HEK293 (cell line): ENCODE measurements at regions of chr5 and their contacts with region 1.

Region 1: DNA sequence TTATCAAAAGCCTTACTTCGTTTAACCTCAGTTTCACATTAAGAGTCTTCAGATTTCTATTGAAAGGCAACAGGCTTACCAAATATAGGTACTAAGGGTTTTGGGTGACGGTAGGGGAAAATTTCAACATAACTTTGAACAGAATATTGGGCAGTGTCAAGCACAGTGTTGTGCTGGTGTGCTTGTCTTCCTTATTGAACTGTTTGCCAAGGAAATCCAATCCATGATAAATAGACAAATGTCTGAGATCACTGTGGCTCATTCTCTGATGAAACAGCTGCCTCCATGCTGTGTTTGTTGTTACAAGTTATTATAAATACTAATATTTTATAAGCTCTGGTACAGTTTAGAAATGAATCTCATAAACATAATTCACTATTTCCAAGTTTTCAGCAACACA is 730.1 kb downstream of the NR2F1-AS1 start:
- H3K4me3 ChIP-seq: no peak overlapping the region
- H3K27ac ChIP-seq: no peak overlapping the region
- H3K4me1 ChIP-seq: no peaks in the 10 kb centered on the region
- CTCF ChIP-seq: no peak

Region 2: DNA sequence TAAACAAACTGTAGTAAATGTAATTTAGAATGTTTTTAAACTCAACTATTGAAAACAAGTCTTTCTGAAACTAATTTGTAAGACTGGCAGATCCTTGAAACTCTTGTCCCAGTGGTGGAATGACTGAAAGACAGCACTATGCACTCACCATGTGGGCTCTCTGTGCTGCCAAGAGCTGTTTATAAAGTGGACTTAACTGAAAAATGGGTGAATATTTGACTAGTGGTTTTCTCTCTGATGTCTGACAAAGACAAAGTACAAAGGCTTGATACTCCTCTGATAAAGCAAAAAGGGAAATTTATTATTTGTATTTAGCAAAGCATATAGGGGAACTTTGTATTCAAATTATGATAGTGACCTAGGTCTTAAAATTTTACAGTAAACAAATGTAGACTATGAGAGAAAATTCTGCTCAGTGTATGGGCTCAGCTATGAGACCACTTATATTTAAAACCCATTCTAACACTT is 94.8 kb after region 1 on chr5:
- CTCF ChIA-PET with region 1: no interaction called
- POLR2A ChIA-PET with region 1: no interaction called
- H3K4me3 ChIP-seq: no peak overlapping the region
- H3K27ac ChIP-seq: no peak overlapping the region
- H3K4me1 ChIP-seq: no peaks in the 10 kb centered on the region
- CTCF ChIP-seq: no peak

Region 3: GRCh38 chr5:93926831-93927620 is 1076.1 kb after region 1 on chr5:
- CTCF ChIA-PET with region 1: interaction called, 10 read pairs
- POLR2A ChIA-PET with region 1: no interaction called
- H3K4me3 ChIP-seq: no peak overlapping the region
- H3K27ac ChIP-seq: no peak overlapping the region
- H3K4me1 ChIP-seq: no peaks in the 10 kb centered on the region
- CTCF ChIP-seq: no peak